ENCODE measurements at regions of chr16 and their contacts with region 1.

Region 1: DNA sequence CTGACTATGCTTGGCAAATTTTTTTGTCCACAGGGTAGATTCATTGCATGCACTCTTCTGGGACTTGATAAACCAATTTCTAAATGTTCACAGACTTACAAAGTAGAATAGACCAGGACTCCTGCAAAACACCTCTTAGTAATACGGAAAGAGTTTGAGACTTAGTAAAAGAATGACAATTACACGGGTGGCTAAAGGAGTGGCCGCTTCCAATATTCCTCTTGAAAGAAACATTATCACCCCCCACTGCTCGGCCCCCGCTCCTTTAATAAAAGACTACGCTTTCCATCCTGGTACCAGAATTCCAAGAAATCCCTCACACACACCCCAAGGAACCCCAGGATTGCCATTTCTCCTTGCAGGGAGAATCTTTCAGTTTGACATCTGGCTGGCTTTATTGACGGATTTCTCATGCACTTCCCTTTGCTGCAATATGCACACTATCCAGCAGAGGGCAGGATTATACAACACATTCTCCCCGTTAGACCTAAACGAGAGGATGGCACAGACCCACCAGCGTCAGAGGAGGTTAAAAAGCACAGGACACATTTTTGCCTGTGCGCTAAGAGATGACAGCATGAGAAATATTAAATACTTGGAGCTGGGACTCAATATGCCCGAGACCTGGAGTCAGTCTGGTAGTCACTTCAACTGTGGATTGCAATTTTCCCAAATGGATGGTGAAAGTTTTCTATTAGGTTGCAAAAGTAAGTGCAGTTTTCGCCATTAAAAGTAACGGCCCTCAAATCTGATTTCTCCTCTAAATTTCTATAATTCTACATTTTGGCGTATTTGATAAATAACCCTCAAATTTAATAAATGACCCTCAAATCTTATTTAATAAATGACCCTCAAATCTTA is 46.6 kb upstream of the NUDT7 start:
- DNase-seq: peak; percentile 63
- ATAC-seq: peak; percentile 90
- H3K4me3 ChIP-seq: no peak overlapping the region
- H3K27ac ChIP-seq: no peak overlapping the region
- H3K4me1 ChIP-seq: no peaks in the 10 kb centered on the region
- H3K27me3 ChIP-seq: peaks cover 6% of the 10 kb centered on the region; the same call in 1 of the 2 replicates
- CTCF ChIP-seq: peak; percentile 80 to 93 (median 84); a peak in 5 of 6 replicates
- POLR2A ChIP-seq: no peak
- RAD21 ChIP-seq: peak; percentile 93

Region 2: GRCh38 chr16:77359065-77359502 is 316.6 kb before region 1 on chr16:
- CTCF ChIA-PET with region 1: no interaction called
- POLR2A ChIA-PET with region 1: no interaction called
- RAD21 ChIA-PET with region 1: no interaction called
- intact Hi-C with region 1: no loop called
- DNase-seq: no peak
- ATAC-seq: no peak
- H3K4me3 ChIP-seq: no peak overlapping the region
- H3K27ac ChIP-seq: no peak overlapping the region
- H3K4me1 ChIP-seq: no peaks in the 10 kb centered on the region
- H3K27me3 ChIP-seq: peaks cover 39% of the 10 kb centered on the region
- CTCF ChIP-seq: no peak
- POLR2A ChIP-seq: no peak
- RAD21 ChIP-seq: no peak

Region 3: DNA sequence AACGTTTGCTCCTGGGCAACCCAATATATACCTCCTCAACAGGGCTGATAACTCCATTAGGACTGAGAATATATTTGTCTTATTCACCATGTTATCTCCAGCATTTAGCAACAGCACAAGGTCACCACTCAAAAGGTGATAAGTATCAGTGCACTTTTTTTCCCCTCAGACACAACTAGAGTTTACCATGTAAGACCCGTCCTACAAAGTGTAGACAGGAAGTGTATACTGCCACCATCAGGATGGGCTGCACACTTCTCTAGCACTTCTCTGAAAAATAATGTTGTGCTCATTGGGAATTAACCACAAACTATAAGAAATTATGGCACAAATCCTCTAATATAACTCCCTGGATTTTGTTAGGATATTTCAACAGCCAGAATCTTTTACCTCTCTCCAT is 107.0 kb after region 1 on chr16:
- CTCF ChIA-PET with region 1: interaction called, 3 read pairs
- POLR2A ChIA-PET with region 1: no interaction called
- RAD21 ChIA-PET with region 1: no interaction called
- intact Hi-C with region 1: loop called (anchors 1 kb)
- DNase-seq: peak; percentile 7
- ATAC-seq: peak; percentile 76; the same call in 1 of the 2 replicates
- H3K4me3 ChIP-seq: no peak overlapping the region
- H3K27ac ChIP-seq: no peak overlapping the region
- H3K4me1 ChIP-seq: peaks cover 2 to 15% of the 10 kb centered on the region in 2 experiments; a peak in 2 of 4 replicates
- H3K27me3 ChIP-seq: peaks cover 25% of the 10 kb centered on the region
- CTCF ChIP-seq: peak; percentile 34 to 66 (median 57); a peak in 4 of 6 replicates
- POLR2A ChIP-seq: no peak
- RAD21 ChIP-seq: peak; percentile 47; the same call in 1 of the 2 replicates

Region 4: GRCh38 chr16:77971306-77972271 is 295.9 kb after region 1 on chr16:
- CTCF ChIA-PET with region 1: interaction called, 9 read pairs
- POLR2A ChIA-PET with region 1: no interaction called
- RAD21 ChIA-PET with region 1: no interaction called
- intact Hi-C with region 1: loop called (anchors 1 kb)
- DNase-seq: peak; percentile 58
- ATAC-seq: peak; percentile 94
- H3K4me3 ChIP-seq: no peak overlapping the region
- H3K27ac ChIP-seq: no peak overlapping the region
- H3K4me1 ChIP-seq: no peaks in the 10 kb centered on the region
- H3K27me3 ChIP-seq: peaks cover 13% of the 10 kb centered on the region
- CTCF ChIP-seq: peak; percentile 69 to 86 (median 71); a peak in 5 of 6 replicates
- POLR2A ChIP-seq: no peak
- RAD21 ChIP-seq: peak; percentile 82

Region 5: GRCh38 chr16:78002915-78003538 is 327.3 kb after region 1 on chr16:
- CTCF ChIA-PET with region 1: interaction called, 7 read pairs
- POLR2A ChIA-PET with region 1: no interaction called
- RAD21 ChIA-PET with region 1: interaction called in 1 of 2 experiments, 3 read pairs
- intact Hi-C with region 1: loop called (anchors 1 kb)
- DNase-seq: peak; percentile 91
- ATAC-seq: peak; percentile 95
- H3K4me3 ChIP-seq: no peak overlapping the region
- H3K27ac ChIP-seq: no peak overlapping the region
- H3K4me1 ChIP-seq: peaks cover 0 to 6% of the 10 kb centered on the region in 2 experiments; a peak in 1 of 4 replicates
- H3K27me3 ChIP-seq: no peaks in the 10 kb centered on the region
- CTCF ChIP-seq: peak; percentile 78 to 92 (median 88)
- POLR2A ChIP-seq: no peak
- RAD21 ChIP-seq: peak; percentile 85

Region 6: DNA sequence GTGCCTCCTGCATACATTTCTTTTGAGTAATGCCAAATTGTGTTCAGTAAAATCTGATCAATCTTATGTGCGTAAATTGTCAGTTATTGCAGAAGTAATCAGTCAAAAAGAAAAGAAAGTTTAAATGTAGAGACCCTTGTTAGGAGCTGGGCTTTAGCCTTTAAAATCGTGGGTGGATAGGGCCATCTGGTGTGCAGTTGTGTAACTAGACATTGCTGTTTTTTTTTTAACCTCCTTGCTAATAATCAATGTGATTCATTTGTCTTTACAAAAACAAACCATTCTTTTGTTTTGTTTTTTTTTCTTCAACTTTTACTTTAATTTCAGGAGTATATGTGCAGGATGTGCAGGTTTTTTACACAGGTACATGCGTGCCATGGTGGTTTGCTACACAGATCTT is 418.5 kb after region 1 on chr16:
- CTCF ChIA-PET with region 1: no interaction called
- POLR2A ChIA-PET with region 1: no interaction called
- RAD21 ChIA-PET with region 1: no interaction called
- intact Hi-C with region 1: loop called (anchors 1 kb)
- DNase-seq: no peak
- ATAC-seq: no peak
- H3K4me3 ChIP-seq: no peak overlapping the region
- H3K27ac ChIP-seq: no peak overlapping the region
- H3K4me1 ChIP-seq: peaks cover 0 to 7% of the 10 kb centered on the region in 2 experiments; a peak in 1 of 4 replicates
- H3K27me3 ChIP-seq: peaks cover 17% of the 10 kb centered on the region
- CTCF ChIP-seq: peak in 2 of 3 experiments; percentile 29 to 31; a peak in 1 of 6 replicates
- POLR2A ChIP-seq: no peak
- RAD21 ChIP-seq: peak; percentile 45; the same call in 1 of the 2 replicates

Measured in HCT116 (cell line).